Ovary (tissue), 10 donors: ENCODE measurements at regions of chr9 and their contacts with region 1.

Region 1: DNA sequence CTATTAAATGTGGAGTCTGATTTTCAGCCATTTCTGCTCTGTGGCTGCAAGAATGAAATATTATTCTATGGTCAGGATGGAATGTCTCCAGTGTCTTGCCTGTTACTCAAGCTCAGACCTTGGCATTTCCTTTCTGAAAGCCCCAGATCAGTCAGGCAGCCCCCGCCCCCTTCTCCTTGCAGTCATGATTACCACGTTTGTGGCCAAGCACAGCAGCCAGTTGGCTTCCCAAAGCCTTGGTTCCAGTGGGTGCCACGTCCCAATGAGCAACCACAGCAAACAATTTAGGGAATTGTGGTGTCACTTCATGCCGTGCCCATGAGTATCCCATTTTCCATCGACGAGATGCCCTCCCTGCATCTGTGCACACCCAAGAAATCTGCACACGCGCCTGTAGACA is 9.7 kb upstream of the OBP2A start:
- DNase-seq: no peak
- H3K4me3 ChIP-seq: no peak overlapping the region
- H3K27ac ChIP-seq: no peak overlapping the region
- H3K4me1 ChIP-seq: no peaks in the 10 kb centered on the region
- H3K27me3 ChIP-seq: no peaks in the 10 kb centered on the region
- CTCF ChIP-seq: no peak
- EP300 ChIP-seq: no peak
- POLR2A ChIP-seq: no peak

Region 2: DNA sequence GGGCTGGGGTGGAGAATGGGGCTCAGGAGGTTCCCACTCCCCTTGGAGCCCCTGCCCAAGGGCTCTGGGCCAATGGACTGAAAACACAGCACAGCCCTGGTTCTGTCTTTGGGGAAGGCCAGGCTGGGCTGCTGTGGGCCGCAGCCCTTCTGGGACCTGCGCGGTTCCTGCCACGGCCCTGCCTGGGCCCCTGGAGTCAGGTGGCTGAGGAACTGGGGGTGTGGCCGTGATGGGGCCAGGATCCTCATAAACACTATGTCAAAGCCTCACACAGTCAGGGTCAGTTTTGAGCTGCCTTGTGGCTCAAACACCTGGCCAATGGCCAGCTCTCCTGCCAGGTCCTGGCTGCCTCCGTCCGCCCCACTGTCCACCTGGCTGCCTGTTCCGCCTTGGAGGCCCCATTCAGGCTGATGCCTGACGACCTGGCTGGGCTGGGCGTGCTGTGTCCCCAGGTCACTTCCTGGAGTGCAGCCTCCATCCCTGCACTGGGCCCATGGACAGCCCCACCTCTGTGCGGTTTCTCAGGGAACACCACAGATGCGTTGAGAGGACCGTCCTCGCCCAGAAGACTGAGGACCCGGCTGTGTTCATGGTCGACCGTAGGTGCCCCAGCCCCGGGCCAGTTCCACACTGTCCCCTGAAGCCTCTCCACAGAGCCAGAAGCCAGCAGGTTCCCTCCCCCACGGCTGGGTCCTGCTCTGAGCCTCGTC is 52.8 kb after region 1 on chr9:
- intact Hi-C with region 1: no loop called
- DNase-seq: no peak
- H3K4me3 ChIP-seq: no peak overlapping the region
- H3K27ac ChIP-seq: no peak overlapping the region
- H3K4me1 ChIP-seq: no peaks in the 10 kb centered on the region
- H3K27me3 ChIP-seq: no peaks in the 10 kb centered on the region
- CTCF ChIP-seq: no peak
- EP300 ChIP-seq: no peak
- POLR2A ChIP-seq: no peak

Region 3: GRCh38 chr9:135826188-135826545 is 290.0 kb after region 1 on chr9:
- intact Hi-C with region 1: no loop called
- DNase-seq: no peak
- H3K4me3 ChIP-seq: no peak overlapping the region
- H3K27ac ChIP-seq: no peak overlapping the region
- H3K4me1 ChIP-seq: no peaks in the 10 kb centered on the region
- H3K27me3 ChIP-seq: no peaks in the 10 kb centered on the region
- CTCF ChIP-seq: no peak
- EP300 ChIP-seq: no peak
- POLR2A ChIP-seq: no peak

Region 4: GRCh38 chr9:136587145-136587943 is 1051.1 kb after region 1 on chr9:
- intact Hi-C with region 1: loop called in 1 of 4 experiments (anchors 10 kb)
- DNase-seq: peak; percentile 74 to 92 (median 84)
- H3K4me3 ChIP-seq: no peak overlapping the region
- H3K27ac ChIP-seq: no peak overlapping the region
- H3K4me1 ChIP-seq: peaks cover 24% of the 10 kb centered on the region
- H3K27me3 ChIP-seq: no peaks in the 10 kb centered on the region
- CTCF ChIP-seq: no peak
- EP300 ChIP-seq: no peak
- POLR2A ChIP-seq: no peak